Activated naive CD8-positive, alpha-beta T cell treated with anti-CD3 and anti-CD28 coated beads, Interleukin-2, amount 10 ng/mL, durations not matched to agents 7 days and 5 days (primary cell): ENCODE measurements at regions of chr6 and their contacts with region 1.

Region 1: DNA sequence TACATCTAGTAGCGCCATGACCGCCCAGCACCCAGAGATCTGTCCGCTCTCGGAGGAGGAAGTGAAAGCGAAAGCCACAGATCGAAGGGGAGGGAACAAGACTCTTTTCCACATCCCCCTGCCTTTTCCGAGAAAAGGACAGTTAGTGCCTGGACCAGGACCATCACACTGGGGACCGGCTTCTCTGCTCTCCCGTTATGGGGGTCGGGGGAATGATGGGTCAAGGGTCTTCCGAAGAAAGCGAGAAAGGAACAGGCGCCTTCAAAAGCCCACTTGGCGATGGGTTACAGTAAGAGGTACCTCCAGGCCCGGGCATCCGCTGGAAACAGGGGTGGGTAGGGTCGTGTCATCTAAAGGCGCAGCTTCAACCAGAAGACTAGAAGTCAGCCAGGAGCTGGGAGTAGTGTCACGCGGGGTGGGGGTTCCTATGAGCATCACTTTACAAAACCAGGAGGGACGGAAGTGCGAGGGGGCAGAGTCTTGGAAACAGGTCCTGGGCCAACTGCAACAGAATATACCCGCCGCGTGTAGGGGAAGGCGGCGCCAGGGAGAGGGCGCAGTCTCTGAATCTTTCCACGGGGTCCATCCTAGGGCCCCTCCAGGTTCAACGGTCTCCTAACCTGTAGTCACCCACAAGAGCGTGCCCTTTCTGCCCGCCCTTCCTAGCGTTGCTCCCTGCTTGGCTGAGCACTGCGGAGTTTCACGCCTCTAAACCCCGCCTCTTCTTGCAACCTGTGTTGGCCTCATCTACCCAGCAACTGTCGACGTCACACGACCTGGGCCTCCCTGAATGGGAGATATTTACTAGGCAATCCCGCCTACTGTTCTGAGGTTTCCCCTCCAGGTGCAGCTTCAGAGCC is at the start of gene PSMB8:
- DNase-seq: peak; percentile 95
- ATAC-seq: peak; percentile 62
- H3K4me3 Mint-ChIP-seq: peak within 1 kb of the TSS; percentile 97
- H3K27ac Mint-ChIP-seq: peak within 1 kb of the TSS; percentile 100
- H3K4me1 Mint-ChIP-seq: peaks cover 74% of the 10 kb centered on the region
- H3K27me3 Mint-ChIP-seq: no peaks in the 10 kb centered on the region
- total RNA-seq, gene PSMB8: 308 to 327 TPM

Region 2: GRCh38 chr6:32763427-32763826 is 80.8 kb before region 1 on chr6 and contains the start of gene HLA-DQB2:
- POLR2A ChIA-PET with region 1: no interaction called
- DNase-seq: no peak
- ATAC-seq: no peak
- H3K4me3 Mint-ChIP-seq: no peak within 1 kb of the TSS
- H3K27ac Mint-ChIP-seq: no peak within 1 kb of the TSS
- H3K4me1 Mint-ChIP-seq: peaks cover 2% of the 10 kb centered on the region
- H3K27me3 Mint-ChIP-seq: peaks cover 36% of the 10 kb centered on the region
- total RNA-seq, gene HLA-DQB2: not detected

Region 3: DNA sequence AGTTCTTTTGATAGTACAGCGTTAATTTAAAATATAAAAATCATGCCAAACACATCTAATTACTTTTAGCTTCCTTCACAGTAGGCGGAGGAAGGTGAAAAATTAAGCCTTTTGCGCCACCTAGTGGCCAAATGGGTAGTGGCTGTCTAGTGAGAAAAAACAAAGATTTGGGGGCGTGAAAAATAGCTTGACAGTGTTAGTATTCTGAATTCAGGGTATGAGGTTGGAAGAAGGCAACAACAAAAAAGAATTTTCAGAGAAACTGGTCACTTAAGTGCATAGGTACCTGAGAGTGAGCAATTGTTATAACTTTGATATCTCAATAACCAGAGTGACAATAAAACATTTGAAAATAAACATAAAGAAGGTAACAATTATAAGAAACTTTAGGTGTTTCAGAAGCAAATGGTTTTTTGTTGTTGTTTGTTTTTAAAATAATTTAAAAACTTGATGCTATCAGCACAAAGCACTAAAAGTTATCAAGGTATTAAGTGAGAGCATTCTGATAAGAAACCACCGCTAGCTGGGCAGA is 24.1 kb after region 1 on chr6:
- POLR2A ChIA-PET with region 1: interaction called, 136 read pairs
- DNase-seq: peak; percentile 81
- ATAC-seq: peak; percentile 57
- H3K4me3 Mint-ChIP-seq: no peak overlapping the region
- H3K27ac Mint-ChIP-seq: no peak overlapping the region
- H3K4me1 Mint-ChIP-seq: peaks cover 32% of the 10 kb centered on the region
- H3K27me3 Mint-ChIP-seq: peaks cover 4% of the 10 kb centered on the region

Region 4: DNA sequence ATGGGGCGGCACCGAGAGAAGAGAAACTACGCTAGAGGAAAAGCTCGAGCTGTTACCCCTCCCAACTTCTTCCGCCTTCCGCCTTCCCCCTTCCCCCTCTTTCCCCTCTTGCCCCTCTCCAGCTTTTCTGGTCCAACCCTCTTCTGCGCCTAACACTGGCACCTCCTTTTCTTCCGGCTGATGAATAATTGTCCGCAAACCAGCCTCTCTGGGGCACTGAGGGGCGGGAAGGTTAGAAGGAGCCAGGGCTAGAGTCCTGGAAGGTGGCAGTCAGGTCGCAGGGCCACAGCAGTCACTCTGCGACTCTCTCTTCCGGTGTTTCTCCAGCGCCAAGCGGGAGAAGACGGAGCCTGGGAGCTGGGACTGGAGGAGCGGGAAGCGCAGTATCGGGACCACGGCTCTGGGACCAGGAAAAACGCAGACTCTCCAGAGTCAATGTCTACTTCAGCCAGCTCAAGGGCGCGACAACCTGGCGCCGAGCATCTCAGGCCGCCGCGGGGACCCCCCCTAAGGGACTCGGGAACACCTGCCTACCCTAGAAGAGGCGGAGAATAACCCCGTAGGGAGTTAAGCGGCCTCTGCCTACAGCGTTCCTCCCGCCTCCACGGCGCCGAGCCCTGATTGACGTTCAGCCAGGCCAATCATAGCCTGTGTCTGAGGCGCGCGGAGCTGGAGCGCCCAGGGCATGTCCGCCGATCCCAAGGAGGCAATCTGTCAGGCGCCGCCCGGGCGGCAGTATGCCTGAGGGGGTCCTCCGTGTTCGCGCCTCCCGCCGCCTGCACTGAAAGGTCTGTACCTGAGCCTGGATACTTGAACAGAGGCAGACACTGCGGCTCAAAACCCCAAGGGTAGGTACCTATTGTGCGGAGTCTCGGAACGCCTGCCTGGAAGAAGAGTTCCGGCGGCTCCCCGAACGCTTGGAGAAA is 50.1 kb after region 1 on chr6:
- POLR2A ChIA-PET with region 1: interaction called, 10 read pairs
- DNase-seq: peak; percentile 96
- ATAC-seq: peak; percentile 99
- H3K4me3 Mint-ChIP-seq: peak overlapping the region; percentile 99
- H3K27ac Mint-ChIP-seq: peak overlapping the region; percentile 96
- H3K4me1 Mint-ChIP-seq: peaks cover 28% of the 10 kb centered on the region
- H3K27me3 Mint-ChIP-seq: no peaks in the 10 kb centered on the region

Region 5: DNA sequence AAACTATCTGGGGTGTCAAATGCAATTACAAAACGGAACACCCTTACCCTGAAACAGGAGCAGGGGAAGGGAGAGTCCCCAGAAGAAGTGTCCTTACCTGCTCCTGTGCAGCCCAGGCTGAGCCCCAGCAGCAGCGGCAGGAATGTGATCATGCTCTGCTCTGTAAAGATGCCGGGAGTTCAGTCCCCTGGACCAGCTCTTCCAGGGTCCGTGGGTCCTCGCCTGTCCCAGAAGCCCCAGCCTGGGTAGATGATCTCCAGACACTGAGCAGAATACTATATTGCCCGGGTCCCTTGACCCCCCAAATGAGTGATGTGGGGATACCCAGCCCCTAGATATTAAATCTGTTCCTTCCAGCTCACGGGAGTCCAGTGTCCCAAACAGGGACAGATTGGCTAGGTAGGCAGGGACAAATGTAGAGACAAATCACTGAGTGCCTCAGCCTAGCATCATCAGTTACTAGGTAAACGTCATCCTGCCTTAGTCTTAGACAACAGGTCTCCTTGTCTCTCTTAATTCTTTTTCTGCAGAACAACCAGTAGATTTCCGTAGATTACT is 96.5 kb after region 1 on chr6 and contains the start of gene HLA-DMB:
- POLR2A ChIA-PET with region 1: interaction called, 14 read pairs
- DNase-seq: peak; percentile 52
- ATAC-seq: peak; percentile 72
- H3K4me3 Mint-ChIP-seq: peak within 1 kb of the TSS; percentile 90
- H3K27ac Mint-ChIP-seq: peak within 1 kb of the TSS; percentile 95
- H3K4me1 Mint-ChIP-seq: peaks cover 69% of the 10 kb centered on the region
- H3K27me3 Mint-ChIP-seq: no peaks in the 10 kb centered on the region
- total RNA-seq, gene HLA-DMB: 14.0 to 14.7 TPM